MCF 10A (cell line): ENCODE measurements at regions of chr2 and their contacts with region 1.

Region 1: DNA sequence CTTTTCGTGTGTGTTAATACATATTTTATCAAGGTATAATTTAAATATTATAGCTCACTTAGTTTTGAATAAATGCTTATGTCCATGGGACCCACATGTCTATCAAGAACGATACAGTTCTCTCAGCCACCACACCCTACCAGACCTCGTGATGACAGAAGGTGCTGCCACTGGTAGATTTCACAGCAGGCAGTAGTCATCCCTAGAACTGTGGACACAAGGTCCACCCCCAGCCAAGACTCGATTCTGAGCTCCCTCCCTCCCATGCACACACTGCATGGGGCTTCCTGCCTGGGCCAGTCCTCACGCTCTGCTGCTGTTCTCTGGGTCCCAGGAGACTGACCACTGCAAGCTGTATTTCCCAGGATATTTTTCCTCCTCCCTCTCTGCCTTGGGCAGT is 26.5 kb upstream of the CREB1 start:
- DNase-seq: no peak
- H3K4me3 Mint-ChIP-seq: no peak overlapping the region
- H3K27ac Mint-ChIP-seq: peak overlapping the region; percentile 95
- H3K4me1 Mint-ChIP-seq: peaks cover 34% of the 10 kb centered on the region
- H3K27me3 Mint-ChIP-seq: no peaks in the 10 kb centered on the region
- CTCF ChIP-seq: no peak

Region 2: GRCh38 chr2:207107551-207107950 is 395.7 kb before region 1 on chr2:
- CTCF ChIA-PET with region 1: no interaction called
- POLR2A ChIA-PET with region 1: no interaction called
- intact Hi-C with region 1: no loop called
- DNase-seq: no peak
- H3K4me3 Mint-ChIP-seq: no peak overlapping the region
- H3K27ac Mint-ChIP-seq: no peak overlapping the region
- H3K4me1 Mint-ChIP-seq: no peaks in the 10 kb centered on the region
- H3K27me3 Mint-ChIP-seq: no peaks in the 10 kb centered on the region
- CTCF ChIP-seq: no peak

Region 3: GRCh38 chr2:207487650-207488311 is 15.5 kb before region 1 on chr2:
- CTCF ChIA-PET with region 1: interaction called, 10 read pairs
- POLR2A ChIA-PET with region 1: interaction called, 3 read pairs
- intact Hi-C with region 1: no loop called
- DNase-seq: peak; percentile 75
- H3K4me3 Mint-ChIP-seq: peak overlapping the region; percentile 46
- H3K27ac Mint-ChIP-seq: peak overlapping the region; percentile 59
- H3K4me1 Mint-ChIP-seq: peaks cover 7% of the 10 kb centered on the region
- H3K27me3 Mint-ChIP-seq: no peaks in the 10 kb centered on the region
- CTCF ChIP-seq: peak; percentile 35

Region 4: DNA sequence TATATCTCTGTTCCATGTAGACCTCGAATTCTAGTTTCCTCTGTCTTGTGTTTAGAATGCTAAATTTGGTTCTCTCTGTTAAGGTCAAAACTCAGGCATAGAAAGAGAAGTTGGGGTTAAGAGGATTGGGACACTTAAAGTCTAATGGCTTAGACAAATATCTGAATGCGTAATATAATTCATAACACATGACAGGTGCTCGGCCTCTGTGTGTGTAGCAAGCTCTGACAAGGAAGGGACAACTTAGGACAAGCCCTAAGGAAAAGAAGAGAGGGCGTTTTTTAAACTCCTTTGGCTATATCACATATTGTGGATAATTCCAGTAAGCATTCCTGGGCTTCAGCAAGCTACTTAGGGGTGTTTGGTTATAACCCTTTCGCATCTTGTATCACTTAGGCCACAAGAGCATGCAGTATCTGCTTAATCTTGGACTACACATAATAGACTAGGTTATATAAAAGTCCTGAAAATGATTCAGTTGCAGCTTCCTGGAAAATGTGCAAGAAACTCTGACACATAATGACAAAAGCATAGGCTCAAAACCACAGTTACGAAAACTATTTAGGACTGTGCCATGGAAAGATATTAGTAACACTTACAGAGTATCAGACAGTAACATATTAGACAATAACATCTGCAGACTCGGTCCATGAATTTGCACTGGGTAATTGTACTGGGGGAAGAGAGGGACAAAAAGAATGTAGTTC is 10.5 kb after region 1 on chr2:
- CTCF ChIA-PET with region 1: no interaction called
- POLR2A ChIA-PET with region 1: interaction called, 22 read pairs
- intact Hi-C with region 1: no loop called
- DNase-seq: peak; percentile 82
- H3K4me3 Mint-ChIP-seq: peak overlapping the region; percentile 55
- H3K27ac Mint-ChIP-seq: peak overlapping the region; percentile 91
- H3K4me1 Mint-ChIP-seq: peaks cover 36% of the 10 kb centered on the region
- H3K27me3 Mint-ChIP-seq: no peaks in the 10 kb centered on the region
- CTCF ChIP-seq: no peak